Activated naive CD8-positive, alpha-beta T cell treated with anti-CD3 and anti-CD28 coated beads, Interleukin-2, amount 10 ng/mL, durations not matched to agents 7 days and 5 days (primary cell): ENCODE measurements at regions of chr1 and their contacts with region 1.

Region 1: GRCh38 chr1:6784560-6785317 is 515 bp upstream of the CAMTA1 start:
- DNase-seq: peak; percentile 98
- ATAC-seq: peak; percentile 85
- H3K4me3 Mint-ChIP-seq: peak overlapping the region; percentile 91
- H3K27ac Mint-ChIP-seq: peak overlapping the region; percentile 89
- H3K4me1 Mint-ChIP-seq: peaks cover 35% of the 10 kb centered on the region
- H3K27me3 Mint-ChIP-seq: no peaks in the 10 kb centered on the region

Region 2: DNA sequence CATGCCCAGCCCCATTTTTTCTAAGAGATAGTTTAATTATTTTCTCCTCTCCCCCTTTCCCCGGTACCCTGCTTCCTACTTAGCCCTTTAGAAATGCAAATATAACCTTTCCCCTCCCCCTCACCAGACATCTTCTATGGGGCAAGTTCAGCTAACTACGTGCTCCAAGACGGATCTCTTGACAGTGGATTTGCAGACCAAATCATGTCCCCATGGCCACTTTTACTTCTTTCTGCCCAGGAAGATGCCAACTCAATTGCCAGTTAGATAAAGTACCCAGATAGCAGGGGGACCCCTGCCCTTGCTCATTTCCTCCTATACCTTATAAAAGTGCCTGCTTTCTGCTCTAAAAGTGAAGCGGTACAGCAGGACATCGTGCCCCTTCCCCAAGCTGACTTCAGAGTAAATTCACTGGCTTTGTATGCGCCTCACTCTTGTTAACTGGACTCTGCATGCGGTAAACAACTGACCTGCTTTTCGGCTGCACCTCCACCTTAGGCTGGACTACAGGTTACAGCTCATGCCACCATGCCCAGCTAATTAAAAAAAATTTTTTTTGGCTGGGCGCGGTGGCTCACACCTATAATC is 90.5 kb before region 1 on chr1:
- POLR2A ChIA-PET with region 1: no interaction called
- DNase-seq: no peak
- ATAC-seq: no peak
- H3K4me3 Mint-ChIP-seq: no peak overlapping the region
- H3K27ac Mint-ChIP-seq: no peak overlapping the region
- H3K4me1 Mint-ChIP-seq: peaks cover 6% of the 10 kb centered on the region
- H3K27me3 Mint-ChIP-seq: no peaks in the 10 kb centered on the region

Region 3: GRCh38 chr1:6743189-6744101 is 41.3 kb before region 1 on chr1:
- POLR2A ChIA-PET with region 1: interaction called, 10 read pairs
- DNase-seq: peak; percentile 63
- ATAC-seq: peak; percentile 42
- H3K4me3 Mint-ChIP-seq: no peak overlapping the region
- H3K27ac Mint-ChIP-seq: no peak overlapping the region
- H3K4me1 Mint-ChIP-seq: peaks cover 1% of the 10 kb centered on the region
- H3K27me3 Mint-ChIP-seq: peaks cover 8% of the 10 kb centered on the region

Region 4: GRCh38 chr1:6801966-6802365 is 17.2 kb after region 1 on chr1:
- POLR2A ChIA-PET with region 1: interaction called, 13 read pairs
- DNase-seq: no peak
- ATAC-seq: no peak
- H3K4me3 Mint-ChIP-seq: no peak overlapping the region
- H3K27ac Mint-ChIP-seq: no peak overlapping the region
- H3K4me1 Mint-ChIP-seq: peaks cover 18% of the 10 kb centered on the region
- H3K27me3 Mint-ChIP-seq: no peaks in the 10 kb centered on the region